Psoas muscle (tissue), 8 donors: ENCODE measurements at regions of chr13 and their contacts with region 1.

Region 1: DNA sequence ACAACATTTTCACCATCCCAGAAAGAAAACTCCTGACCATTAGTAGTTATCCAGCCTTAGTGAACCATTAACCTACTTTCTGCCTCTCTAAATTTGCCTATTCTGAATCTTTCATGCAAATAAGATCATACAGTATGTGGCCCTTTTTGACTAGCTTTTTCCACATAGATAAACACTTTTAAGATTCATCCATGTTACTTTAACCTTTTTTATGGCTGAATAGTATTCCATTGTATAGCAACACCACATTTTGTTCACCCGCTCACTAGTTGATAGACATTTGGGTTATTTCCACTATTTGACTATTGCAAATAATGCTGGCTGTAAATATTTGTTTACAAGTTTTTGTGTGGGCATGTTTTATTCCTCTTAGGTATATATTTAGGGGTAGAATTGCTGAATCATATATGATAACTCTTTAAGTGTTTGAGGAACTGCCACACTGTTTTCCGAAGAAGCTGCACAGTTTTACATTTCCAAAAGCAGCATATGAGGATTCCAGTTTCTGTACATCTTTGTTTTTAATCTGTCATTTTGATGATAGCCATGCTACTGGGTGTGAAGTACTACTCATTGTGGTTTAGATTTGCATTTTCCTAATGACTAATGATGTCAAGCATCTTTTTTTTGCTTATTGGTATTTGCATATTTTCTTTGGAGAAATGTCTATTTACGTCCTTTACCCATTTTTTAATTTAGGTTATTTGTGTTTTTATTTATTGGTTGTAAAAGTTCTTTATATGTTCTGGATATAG is 17.1 kb downstream of the COG6 start:
- DNase-seq: no peak
- ATAC-seq: no peak
- H3K4me3 ChIP-seq: no peak overlapping the region
- H3K27ac ChIP-seq: no peak overlapping the region
- H3K4me1 ChIP-seq: no peaks in the 10 kb centered on the region
- H3K27me3 ChIP-seq: no peaks in the 10 kb centered on the region
- CTCF ChIP-seq: no peak

Region 2: GRCh38 chr13:39051157-39051556 is 621.4 kb before region 1 on chr13:
- intact Hi-C with region 1: loop called in 1 of 2 experiments (anchors 5 kb)
- DNase-seq: no peak
- ATAC-seq: no peak
- H3K4me3 ChIP-seq: no peak overlapping the region
- H3K27ac ChIP-seq: no peak overlapping the region
- H3K4me1 ChIP-seq: no peaks in the 10 kb centered on the region
- H3K27me3 ChIP-seq: no peaks in the 10 kb centered on the region
- CTCF ChIP-seq: peak; percentile 43